PC-9 (cell line): ENCODE measurements at regions of chr11 and their contacts with region 1.

Region 1: DNA sequence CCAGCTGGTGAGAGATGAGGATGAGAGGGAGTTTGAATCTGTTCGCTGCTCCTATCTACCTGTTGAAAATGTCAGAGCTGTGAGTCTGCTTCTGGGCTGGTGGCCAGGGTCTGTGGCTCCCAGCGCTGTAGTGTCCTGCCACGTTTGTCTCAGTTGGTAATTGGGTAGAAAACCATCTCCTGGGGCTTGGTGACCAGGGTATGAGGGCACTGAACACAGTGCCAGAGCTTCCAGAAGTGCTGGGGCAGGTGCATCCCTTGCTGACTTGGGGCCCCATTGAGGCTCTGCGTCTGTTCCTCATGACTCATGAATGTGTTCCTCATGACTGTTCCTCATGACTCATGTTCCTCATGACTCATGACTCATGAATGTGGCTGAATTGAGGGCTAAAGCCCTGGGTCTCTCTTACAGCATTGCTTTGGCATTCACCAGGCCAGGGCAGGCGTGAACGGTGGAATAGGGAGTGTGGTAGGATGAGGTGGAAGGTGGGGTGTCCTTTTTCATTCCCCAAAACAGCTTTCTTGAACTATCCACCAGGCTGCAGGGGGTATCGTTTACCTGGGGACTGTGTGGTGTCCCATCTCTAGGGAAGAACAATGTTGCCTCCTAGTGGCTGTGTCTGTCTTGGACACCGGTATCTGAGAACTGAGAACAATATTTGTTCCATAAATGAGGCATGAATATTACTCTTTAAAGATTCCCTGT is 139.5 kb downstream of the COMMD9 start:
- DNase-seq: peak; percentile 94 to 100
- H3K4me3 ChIP-seq: no peak overlapping the region; the same call in 1 of the 2 replicates
- H3K27ac ChIP-seq: peak overlapping the region; percentile 89
- H3K4me1 ChIP-seq: peaks cover 30% of the 10 kb centered on the region
- H3K27me3 ChIP-seq: no peaks in the 10 kb centered on the region
- CTCF ChIP-seq: peak; percentile 88

Region 2: GRCh38 chr11:35419184-35419829 is 730.4 kb before region 1 on chr11 and contains the start of gene SLC1A2:
- CTCF ChIA-PET with region 1: interaction called, 11 read pairs
- POLR2A ChIA-PET with region 1: no interaction called
- intact Hi-C with region 1: no loop called
- DNase-seq: peak in 1 of 2 experiments; percentile 11
- H3K4me3 ChIP-seq: no peak within 1 kb of the TSS
- H3K27ac ChIP-seq: no peak within 1 kb of the TSS
- H3K4me1 ChIP-seq: no peaks in the 10 kb centered on the region
- H3K27me3 ChIP-seq: peaks cover 79% of the 10 kb centered on the region
- CTCF ChIP-seq: no peak
- total RNA-seq, gene SLC1A2: 0.09 and 0.38 TPM in 2 replicates

Region 3: GRCh38 chr11:35662649-35663407 is 486.9 kb before region 1 on chr11 and contains the start of gene TRIM44:
- CTCF ChIA-PET with region 1: no interaction called
- POLR2A ChIA-PET with region 1: no interaction called
- intact Hi-C with region 1: loop called (anchors 2 kb)
- DNase-seq: peak; percentile 81 to 89
- H3K4me3 ChIP-seq: peak within 1 kb of the TSS; percentile 88
- H3K27ac ChIP-seq: peak within 1 kb of the TSS; percentile 89
- H3K4me1 ChIP-seq: peaks cover 47% of the 10 kb centered on the region
- H3K27me3 ChIP-seq: no peaks in the 10 kb centered on the region
- CTCF ChIP-seq: no peak
- total RNA-seq, gene TRIM44: 91.7 and 100 TPM in 2 replicates

Region 4: GRCh38 chr11:35893796-35894475 is 255.8 kb before region 1 on chr11:
- CTCF ChIA-PET with region 1: no interaction called
- POLR2A ChIA-PET with region 1: no interaction called
- intact Hi-C with region 1: loop called (anchors 1 kb)
- DNase-seq: peak; percentile 89 to 93
- H3K4me3 ChIP-seq: no peak overlapping the region
- H3K27ac ChIP-seq: no peak overlapping the region
- H3K4me1 ChIP-seq: peaks cover 27% of the 10 kb centered on the region
- H3K27me3 ChIP-seq: no peaks in the 10 kb centered on the region
- CTCF ChIP-seq: no peak

Region 5: GRCh38 chr11:36034551-36035331 is 114.9 kb before region 1 on chr11:
- CTCF ChIA-PET with region 1: no interaction called
- POLR2A ChIA-PET with region 1: no interaction called
- intact Hi-C with region 1: loop called (anchors 2 kb)
- DNase-seq: peak; percentile 55 to 97
- H3K4me3 ChIP-seq: 0 out of 2 replicates have a peak overlapping the region, but pooled peaks have one; percentile 25
- H3K27ac ChIP-seq: peak overlapping the region; percentile 38
- H3K4me1 ChIP-seq: peaks cover 25% of the 10 kb centered on the region
- H3K27me3 ChIP-seq: no peaks in the 10 kb centered on the region
- CTCF ChIP-seq: 0 out of 2 replicates have a peak, but pooled peaks have one; percentile 8

Region 6: GRCh38 chr11:36162883-36163434 is 13.3 kb after region 1 on chr11:
- CTCF ChIA-PET with region 1: no interaction called
- POLR2A ChIA-PET with region 1: no interaction called
- intact Hi-C with region 1: no loop called
- DNase-seq: no peak
- H3K4me3 ChIP-seq: no peak overlapping the region
- H3K27ac ChIP-seq: no peak overlapping the region
- H3K4me1 ChIP-seq: no peaks in the 10 kb centered on the region
- H3K27me3 ChIP-seq: no peaks in the 10 kb centered on the region
- CTCF ChIP-seq: no peak

Region 7: GRCh38 chr11:36447972-36448371 is 298.3 kb after region 1 on chr11:
- CTCF ChIA-PET with region 1: no interaction called
- POLR2A ChIA-PET with region 1: no interaction called
- intact Hi-C with region 1: loop called (anchors 2 kb)
- DNase-seq: peak; percentile 95 to 98
- H3K4me3 ChIP-seq: no peak overlapping the region
- H3K27ac ChIP-seq: peak overlapping the region; percentile 38
- H3K4me1 ChIP-seq: peaks cover 51% of the 10 kb centered on the region
- H3K27me3 ChIP-seq: no peaks in the 10 kb centered on the region
- CTCF ChIP-seq: no peak

Region 8: GRCh38 chr11:37647767-37648166 is 1498.1 kb after region 1 on chr11:
- CTCF ChIA-PET with region 1: no interaction called
- POLR2A ChIA-PET with region 1: no interaction called
- intact Hi-C with region 1: no loop called
- DNase-seq: no peak
- H3K4me3 ChIP-seq: no peak overlapping the region
- H3K27ac ChIP-seq: no peak overlapping the region
- H3K4me1 ChIP-seq: no peaks in the 10 kb centered on the region
- H3K27me3 ChIP-seq: no peaks in the 10 kb centered on the region
- CTCF ChIP-seq: no peak